ENCODE measurements at regions of chr14 and their contacts with region 1.

Region 1: GRCh38 chr14:95993768-95994592 is 45.2 kb upstream of the C14orf132 start:
- DNase-seq: peak in 1 of 2 experiments; percentile 25
- H3K4me3 ChIP-seq: no peak overlapping the region
- H3K4me3 Mint-ChIP-seq: no peak overlapping the region
- H3K27ac Mint-ChIP-seq: no peak overlapping the region
- H3K4me1 ChIP-seq: no peaks in the 10 kb centered on the region
- H3K4me1 Mint-ChIP-seq: no peaks in the 10 kb centered on the region
- H3K27me3 ChIP-seq: no peaks in the 10 kb centered on the region
- H3K27me3 Mint-ChIP-seq: peaks cover 3% of the 10 kb centered on the region
- CTCF ChIP-seq: peak; percentile 76 to 79

Region 2: DNA sequence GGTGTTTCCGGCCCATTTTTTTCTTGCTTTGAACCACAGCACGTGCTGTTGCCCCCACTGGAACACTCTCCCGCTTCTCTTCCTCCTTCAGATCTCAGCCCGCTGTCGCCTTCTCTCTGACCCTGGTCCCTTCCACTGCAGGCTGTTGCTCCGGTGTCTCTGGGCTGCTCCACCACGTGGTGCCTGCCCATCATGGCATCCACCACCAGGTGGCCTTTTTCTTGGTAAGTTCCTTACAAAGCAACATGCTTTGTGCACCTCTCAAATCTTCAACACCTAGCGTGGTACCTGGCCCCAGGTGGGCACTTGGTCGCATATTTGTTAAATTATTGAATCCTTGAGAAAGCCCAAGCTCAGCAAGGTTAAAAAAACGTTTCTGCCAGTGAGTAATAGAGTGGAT is 98.3 kb before region 1 on chr14:
- CTCF ChIA-PET with region 1: interaction called, 3 read pairs
- POLR2A ChIA-PET with region 1: no interaction called
- intact Hi-C with region 1: loop called (anchors 1 kb)
- DNase-seq: peak; percentile 43 to 59
- H3K4me3 ChIP-seq: no peak overlapping the region
- H3K4me3 Mint-ChIP-seq: no peak overlapping the region
- H3K27ac Mint-ChIP-seq: no peak overlapping the region
- H3K4me1 ChIP-seq: no peaks in the 10 kb centered on the region
- H3K4me1 Mint-ChIP-seq: no peaks in the 10 kb centered on the region
- H3K27me3 ChIP-seq: no peaks in the 10 kb centered on the region
- H3K27me3 Mint-ChIP-seq: peaks cover 47% of the 10 kb centered on the region
- CTCF ChIP-seq: peak; percentile 43 to 52

Region 3: DNA sequence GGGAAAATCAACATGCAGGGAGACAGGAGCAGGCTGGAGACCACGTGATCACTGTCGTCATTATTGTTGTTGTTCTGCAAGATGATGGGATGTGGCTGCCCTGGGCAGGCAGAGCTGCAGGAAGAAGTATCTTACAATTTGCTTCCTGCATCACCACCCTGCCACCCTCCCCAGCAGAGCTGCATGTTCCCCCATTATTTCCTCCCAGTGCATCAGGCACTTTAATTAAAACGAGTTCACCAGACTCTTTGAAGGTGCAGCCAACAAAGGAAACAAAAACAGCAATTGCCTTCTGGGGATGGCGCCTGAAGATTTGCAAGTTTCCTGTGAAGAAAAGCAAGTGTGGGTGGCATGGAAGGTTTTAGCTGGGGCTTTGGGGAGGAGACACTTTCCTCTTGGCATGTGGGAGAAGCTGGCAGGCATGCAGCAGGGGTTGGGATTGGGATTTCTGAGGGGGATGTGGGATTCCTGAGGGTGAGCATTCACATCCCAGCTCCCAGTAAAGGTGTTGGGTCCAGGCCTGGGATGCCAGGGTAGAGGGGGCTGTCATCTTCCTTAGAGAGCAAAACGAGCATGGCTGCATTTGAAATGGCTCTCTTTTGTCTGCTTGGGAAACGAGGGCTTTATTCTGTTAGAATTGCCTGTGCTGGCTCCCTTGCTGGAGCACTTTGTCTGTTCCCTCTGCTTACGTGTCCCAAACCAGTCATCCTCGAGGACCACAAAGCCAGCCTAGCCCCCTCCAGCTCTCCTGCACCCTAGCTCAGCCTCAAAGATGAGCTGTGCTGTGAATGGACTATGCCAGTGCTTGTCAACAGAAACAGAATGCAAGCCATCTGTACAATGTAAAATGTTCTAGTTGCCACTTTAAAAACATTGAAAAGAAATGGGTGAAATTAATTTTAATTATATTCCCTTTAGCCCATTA is 33.7 kb after region 1 on chr14:
- CTCF ChIA-PET with region 1: no interaction called
- POLR2A ChIA-PET with region 1: no interaction called
- intact Hi-C with region 1: no loop called
- DNase-seq: no peak
- H3K4me3 ChIP-seq: no peak overlapping the region
- H3K4me3 Mint-ChIP-seq: no peak overlapping the region
- H3K27ac Mint-ChIP-seq: no peak overlapping the region
- H3K4me1 ChIP-seq: no peaks in the 10 kb centered on the region
- H3K4me1 Mint-ChIP-seq: no peaks in the 10 kb centered on the region
- H3K27me3 ChIP-seq: no peaks in the 10 kb centered on the region; the same call in 1 of the 2 replicates
- H3K27me3 Mint-ChIP-seq: peaks cover 4% of the 10 kb centered on the region
- CTCF ChIP-seq: no peak

Region 4: DNA sequence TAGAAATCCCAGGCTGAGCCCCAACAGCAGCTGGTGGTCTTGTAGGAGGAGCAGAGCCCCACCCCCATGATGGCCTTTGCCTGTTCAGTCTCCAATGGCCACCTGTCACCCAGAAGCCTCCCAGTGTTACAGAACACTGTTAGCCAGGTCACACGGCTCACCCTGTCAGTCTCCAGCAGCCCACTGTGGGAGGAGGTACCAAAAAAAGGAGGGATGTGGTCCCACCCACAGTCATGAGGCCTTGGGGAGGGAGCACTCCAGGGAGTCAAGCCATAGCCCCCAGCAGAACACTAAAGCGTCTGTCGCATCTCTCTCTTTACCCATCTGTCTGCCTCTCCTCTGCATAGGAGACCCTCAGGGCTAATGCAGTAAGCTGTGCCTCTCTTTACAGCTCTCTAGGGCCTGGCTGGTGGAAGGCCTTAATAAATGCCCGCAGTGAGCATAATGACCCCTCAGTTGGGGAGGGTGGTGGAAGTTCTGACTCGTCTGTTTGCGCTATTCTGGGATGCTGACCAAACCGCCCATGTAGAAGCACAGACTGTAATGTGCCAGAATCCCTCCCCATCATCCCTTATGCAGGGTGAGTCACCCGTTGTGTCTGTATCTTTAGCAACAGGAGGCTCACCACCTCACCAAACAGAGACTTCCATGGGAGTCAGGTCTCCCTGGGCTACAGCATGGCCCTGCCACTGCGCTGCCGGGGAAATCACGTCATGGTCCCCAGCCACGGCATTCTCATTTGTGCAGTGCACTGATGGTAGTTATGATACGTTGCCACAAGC is 59.8 kb after region 1 on chr14:
- CTCF ChIA-PET with region 1: interaction called, 3 read pairs
- POLR2A ChIA-PET with region 1: no interaction called
- intact Hi-C with region 1: loop called (anchors 5 kb)
- DNase-seq: no peak
- H3K4me3 ChIP-seq: no peak overlapping the region
- H3K4me3 Mint-ChIP-seq: no peak overlapping the region
- H3K27ac Mint-ChIP-seq: no peak overlapping the region
- H3K4me1 ChIP-seq: no peaks in the 10 kb centered on the region
- H3K4me1 Mint-ChIP-seq: no peaks in the 10 kb centered on the region
- H3K27me3 ChIP-seq: no peaks in the 10 kb centered on the region
- H3K27me3 Mint-ChIP-seq: peaks cover 10% of the 10 kb centered on the region
- CTCF ChIP-seq: no peak

Measured in Caco-2 (cell line).